Activated CD4-positive, alpha-beta memory T cell treated with anti-CD3 and anti-CD28 coated beads for 36 hours (primary cell): ENCODE measurements at regions of chr17 and their contacts with region 1.

Region 1: GRCh38 chr17:78360371-78361224 is 721 bp upstream of the SOCS3 start:
- DNase-seq: peak; percentile 96
- H3K4me3 Mint-ChIP-seq: peak overlapping the region; percentile 81
- H3K27ac Mint-ChIP-seq: peak overlapping the region; percentile 86
- H3K4me1 Mint-ChIP-seq: peaks cover 37% of the 10 kb centered on the region
- H3K27me3 Mint-ChIP-seq: peaks cover 4% of the 10 kb centered on the region

Region 2: GRCh38 chr17:78258323-78259191 is 102.0 kb before region 1 on chr17:
- CTCF ChIA-PET with region 1: interaction called, 3 read pairs
- POLR2A ChIA-PET with region 1: no interaction called
- intact Hi-C with region 1: loop called (anchors 2 kb)
- DNase-seq: peak; percentile 90
- H3K4me3 Mint-ChIP-seq: peak overlapping the region; percentile 73
- H3K27ac Mint-ChIP-seq: peak overlapping the region; percentile 86
- H3K4me1 Mint-ChIP-seq: peaks cover 45% of the 10 kb centered on the region
- H3K27me3 Mint-ChIP-seq: no peaks in the 10 kb centered on the region

Region 3: DNA sequence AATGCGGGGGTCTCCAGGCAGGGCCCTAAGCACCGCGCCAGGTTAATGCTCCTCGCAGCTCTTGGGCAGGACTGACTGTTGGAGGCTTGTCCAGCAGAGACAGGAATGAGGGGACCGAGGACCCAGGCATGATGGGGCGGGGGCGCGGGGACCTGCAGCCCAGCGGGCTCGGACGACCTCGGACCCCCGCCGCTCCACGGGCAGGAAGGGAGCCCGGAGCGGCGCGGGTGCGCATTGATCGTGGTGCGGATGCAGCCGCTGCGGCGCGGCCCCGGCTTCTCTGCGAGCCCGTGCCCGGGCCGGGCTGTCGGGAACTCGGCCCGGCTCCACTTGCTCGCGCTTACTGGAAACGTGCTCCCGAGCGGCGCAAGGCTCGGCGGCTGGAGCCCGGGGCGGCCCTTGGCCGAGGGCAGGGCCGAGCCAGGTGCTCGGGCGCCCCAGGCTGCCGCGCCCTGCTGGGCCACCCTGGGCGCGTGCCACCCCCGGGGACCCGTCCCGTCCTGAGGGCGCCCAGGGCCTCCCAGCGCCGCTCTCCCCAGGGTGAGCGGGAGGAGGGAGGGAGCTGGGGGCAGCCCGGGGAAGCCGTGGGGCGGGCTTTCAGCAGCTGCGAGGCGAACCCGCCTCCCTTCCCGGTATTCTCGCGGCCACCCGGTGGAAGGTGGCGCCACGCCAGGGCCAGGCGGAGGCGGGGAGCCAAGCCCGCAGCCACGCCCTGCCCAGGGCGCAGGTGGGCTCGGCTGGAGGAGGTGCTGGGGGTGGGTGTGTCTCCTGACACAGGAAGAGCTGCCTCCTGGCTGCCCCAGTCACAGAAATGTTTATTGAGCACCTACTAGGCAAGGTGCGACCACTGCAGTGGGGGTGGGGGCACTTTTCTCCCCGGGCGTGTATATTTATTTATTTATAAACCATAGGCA is 46.6 kb before region 1 on chr17:
- CTCF ChIA-PET with region 1: interaction called, 10 read pairs
- POLR2A ChIA-PET with region 1: interaction called, 12 read pairs
- intact Hi-C with region 1: loop called (anchors 1 kb)
- DNase-seq: peak; percentile 86
- H3K4me3 Mint-ChIP-seq: peak overlapping the region; percentile 59
- H3K27ac Mint-ChIP-seq: peak overlapping the region; percentile 87
- H3K4me1 Mint-ChIP-seq: peaks cover 49% of the 10 kb centered on the region
- H3K27me3 Mint-ChIP-seq: peaks cover 1% of the 10 kb centered on the region

Region 4: GRCh38 chr17:78378225-78379130 is 17.9 kb after region 1 on chr17 and contains the start of gene PGS1:
- CTCF ChIA-PET with region 1: interaction called, 35 read pairs
- POLR2A ChIA-PET with region 1: interaction called, 28 read pairs
- intact Hi-C with region 1: loop called (anchors 1 kb)
- DNase-seq: peak; percentile 89
- H3K4me3 Mint-ChIP-seq: peak within 1 kb of the TSS; percentile 99
- H3K27ac Mint-ChIP-seq: peak within 1 kb of the TSS; percentile 99
- H3K4me1 Mint-ChIP-seq: peaks cover 62% of the 10 kb centered on the region
- H3K27me3 Mint-ChIP-seq: peaks cover 2% of the 10 kb centered on the region
- total RNA-seq, gene PGS1: 75.8 to 78.1 TPM

Region 5: DNA sequence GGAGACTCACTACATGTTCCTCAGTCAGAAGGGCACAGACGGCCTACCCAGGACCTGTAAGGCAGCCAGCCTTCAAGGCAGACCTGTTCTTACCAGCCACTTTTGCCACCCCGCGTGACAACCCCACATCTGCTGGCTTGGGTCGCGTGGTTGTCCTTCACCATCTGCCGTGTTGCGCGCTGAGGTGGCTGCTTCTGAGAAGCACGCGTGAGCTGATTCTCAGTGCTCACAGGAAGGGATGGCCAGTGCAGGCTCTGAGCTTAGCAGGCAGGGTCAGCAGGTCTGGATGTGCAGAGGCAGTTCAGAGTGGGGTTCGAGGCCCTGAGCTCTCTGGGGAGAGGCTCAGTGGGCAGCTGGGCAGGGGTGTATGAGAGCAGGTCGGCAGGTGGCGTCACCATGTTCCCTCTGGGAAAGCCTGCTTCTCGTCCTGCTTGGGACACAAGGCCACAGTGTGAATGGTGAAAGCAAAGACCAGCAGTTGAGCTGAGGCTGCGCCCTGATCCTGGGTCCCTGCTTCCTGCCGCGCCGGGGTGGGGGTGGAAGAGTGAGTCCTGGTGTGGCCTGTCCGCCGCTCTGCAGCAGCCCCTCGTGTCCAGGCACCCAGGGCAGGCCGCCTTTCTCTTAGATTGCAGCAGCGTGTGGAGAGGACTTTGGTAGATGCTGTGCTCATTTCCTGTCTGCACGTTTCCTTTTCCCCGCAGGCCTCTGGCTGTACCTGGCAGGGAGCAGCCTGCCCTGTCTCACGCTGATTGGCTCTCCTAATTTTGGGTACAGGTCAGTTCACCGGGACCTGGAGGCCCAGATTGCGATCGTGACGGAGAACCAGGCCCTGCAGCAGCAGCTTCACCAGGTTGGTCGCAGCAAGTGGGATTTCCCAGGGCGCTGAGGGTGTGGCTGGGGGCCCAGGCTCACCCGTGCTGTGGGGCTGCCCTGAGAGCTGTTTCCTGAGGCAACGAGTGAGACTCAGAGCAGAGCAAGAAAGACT is 53.9 kb after region 1 on chr17:
- CTCF ChIA-PET with region 1: interaction called, 135 read pairs
- POLR2A ChIA-PET with region 1: interaction called, 17 read pairs
- intact Hi-C with region 1: no loop called
- DNase-seq: peak; percentile 80
- H3K4me3 Mint-ChIP-seq: peak overlapping the region; percentile 76
- H3K27ac Mint-ChIP-seq: peak overlapping the region; percentile 84
- H3K4me1 Mint-ChIP-seq: peaks cover 80% of the 10 kb centered on the region
- H3K27me3 Mint-ChIP-seq: no peaks in the 10 kb centered on the region

Region 6: GRCh38 chr17:78806451-78806850 is 445.9 kb after region 1 on chr17:
- CTCF ChIA-PET with region 1: no interaction called
- POLR2A ChIA-PET with region 1: no interaction called
- intact Hi-C with region 1: no loop called
- DNase-seq: peak; percentile 60
- H3K4me3 Mint-ChIP-seq: no peak overlapping the region
- H3K27ac Mint-ChIP-seq: peak overlapping the region; percentile 95
- H3K4me1 Mint-ChIP-seq: peaks cover 51% of the 10 kb centered on the region
- H3K27me3 Mint-ChIP-seq: no peaks in the 10 kb centered on the region

Region 7: DNA sequence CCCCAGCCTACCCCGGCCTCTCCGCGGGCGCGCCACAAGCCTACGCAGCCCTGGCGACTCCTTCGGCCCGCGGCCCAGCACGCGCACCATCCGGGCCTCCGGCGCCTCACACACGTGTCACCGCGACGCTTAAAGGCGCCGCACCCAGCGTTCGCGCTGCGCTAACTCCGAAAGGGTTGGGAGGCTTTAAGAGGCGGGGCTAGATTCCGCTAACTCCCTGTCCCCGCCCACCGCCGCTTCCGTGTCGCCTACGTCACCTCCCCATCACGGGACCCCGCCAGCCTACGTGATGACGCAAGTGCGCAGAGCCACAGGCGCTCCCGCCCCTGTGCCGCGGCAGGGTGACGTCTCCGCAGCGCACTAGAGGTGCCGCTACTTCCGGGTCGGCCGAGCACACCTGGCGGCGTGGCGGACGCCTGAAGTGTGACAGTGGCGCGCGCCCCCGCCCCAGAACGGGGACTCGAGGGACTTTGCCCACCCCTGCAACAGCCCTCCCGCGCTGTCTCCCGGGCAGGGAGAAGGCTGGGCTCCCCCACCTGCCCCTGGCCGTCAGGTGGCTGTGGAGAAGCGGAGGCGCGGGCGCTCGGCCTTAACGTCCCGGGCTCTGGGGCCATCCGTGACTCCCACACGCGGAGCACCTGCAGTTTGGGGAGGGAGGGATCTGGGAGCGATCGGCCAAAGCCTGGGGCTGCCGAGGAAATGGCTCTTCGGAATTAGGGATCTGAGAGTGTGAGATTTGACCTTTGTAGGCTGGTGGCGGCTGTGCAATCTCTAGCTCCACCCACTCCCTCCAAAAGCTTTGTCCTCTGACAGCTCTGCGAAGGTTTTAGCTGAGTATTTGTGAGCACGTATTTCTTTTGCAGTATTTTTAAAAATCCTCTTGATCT is 480.4 kb after region 1 on chr17 and contains the start of gene USP36:
- CTCF ChIA-PET with region 1: no interaction called
- POLR2A ChIA-PET with region 1: no interaction called
- intact Hi-C with region 1: loop called (anchors 1 kb)
- DNase-seq: peak; percentile 100
- H3K4me3 Mint-ChIP-seq: peak within 1 kb of the TSS; percentile 84
- H3K27ac Mint-ChIP-seq: peak within 1 kb of the TSS; percentile 89
- H3K4me1 Mint-ChIP-seq: peaks cover 46% of the 10 kb centered on the region
- H3K27me3 Mint-ChIP-seq: no peaks in the 10 kb centered on the region
- total RNA-seq, gene USP36: 71.2 to 74.3 TPM